PC-3 (cell line): ENCODE measurements at regions of chr7 and their contacts with region 1.

Region 1: DNA sequence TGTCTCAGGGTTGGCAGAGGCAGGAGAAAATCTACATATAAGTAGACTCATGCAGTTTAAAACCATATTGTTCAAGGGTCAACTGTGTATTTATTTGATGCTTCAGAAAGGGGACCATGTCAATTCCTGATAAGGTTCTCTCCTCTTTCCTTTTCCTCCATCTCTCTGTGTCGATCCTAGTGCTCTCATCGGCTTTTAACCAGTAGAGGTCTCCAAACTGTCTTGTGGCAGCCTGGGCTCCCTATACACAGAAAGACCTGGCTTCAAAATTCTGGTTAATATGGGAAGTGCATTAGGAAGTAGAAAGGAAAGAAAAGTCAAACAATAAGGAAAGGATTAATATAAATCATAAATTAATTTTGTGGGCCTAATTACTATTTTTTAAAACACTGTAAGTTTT is 304.4 kb upstream of the C7orf33 start:
- DNase-seq: peak; percentile 54
- ATAC-seq: peak; percentile 81
- H3K4me3 ChIP-seq: no peak overlapping the region
- H3K27ac ChIP-seq: no peak overlapping the region
- H3K4me1 ChIP-seq: no peaks in the 10 kb centered on the region
- H3K27me3 ChIP-seq: peaks cover 17% of the 10 kb centered on the region
- CTCF ChIP-seq: peak; percentile 69

Region 2: DNA sequence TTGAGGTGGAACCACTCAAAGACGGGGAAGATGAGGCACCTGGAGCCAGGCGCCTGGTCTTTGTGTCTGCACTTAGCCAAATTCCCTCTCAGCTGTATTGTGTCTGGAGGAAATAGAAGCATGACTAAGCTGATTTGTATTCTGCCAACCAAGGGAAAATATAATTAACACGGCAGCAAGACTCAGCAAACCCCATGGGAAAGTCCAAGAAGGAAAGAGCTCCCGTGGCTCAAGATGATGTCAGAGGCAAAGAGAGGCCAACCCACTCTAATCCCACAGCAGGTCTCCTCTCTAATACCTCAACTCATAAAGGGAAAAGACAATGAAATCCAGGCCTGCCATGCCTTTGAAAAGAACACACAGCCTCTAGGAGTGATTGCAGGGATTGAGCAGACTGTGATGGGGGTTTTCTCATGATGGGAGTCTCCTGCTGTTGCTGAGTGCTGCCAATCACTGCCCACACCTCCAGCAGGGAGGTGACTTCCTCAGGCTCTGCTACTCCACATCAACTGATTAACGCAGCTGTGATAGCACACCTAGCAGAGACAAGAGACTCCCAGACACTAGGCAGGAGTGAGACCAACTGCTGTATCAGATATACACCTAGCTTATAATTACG is 48.9 kb after region 1 on chr7:
- CTCF ChIA-PET with region 1: no interaction called
- POLR2A ChIA-PET with region 1: no interaction called
- intact Hi-C with region 1: loop called (anchors 5 kb)
- DNase-seq: peak; percentile 41
- ATAC-seq: peak; percentile 11; the same call in 1 of the 2 replicates
- H3K4me3 ChIP-seq: no peak overlapping the region
- H3K27ac ChIP-seq: no peak overlapping the region
- H3K4me1 ChIP-seq: peaks cover 38% of the 10 kb centered on the region
- H3K27me3 ChIP-seq: peaks cover 20% of the 10 kb centered on the region
- CTCF ChIP-seq: no peak

Region 3: GRCh38 chr7:148398844-148399373 is 112.8 kb after region 1 on chr7:
- CTCF ChIA-PET with region 1: no interaction called
- POLR2A ChIA-PET with region 1: no interaction called
- intact Hi-C with region 1: no loop called
- DNase-seq: peak; percentile 10
- ATAC-seq: no peak
- H3K4me3 ChIP-seq: no peak overlapping the region
- H3K27ac ChIP-seq: no peak overlapping the region
- H3K4me1 ChIP-seq: no peaks in the 10 kb centered on the region
- H3K27me3 ChIP-seq: peaks cover 75% of the 10 kb centered on the region
- CTCF ChIP-seq: no peak

Region 4: DNA sequence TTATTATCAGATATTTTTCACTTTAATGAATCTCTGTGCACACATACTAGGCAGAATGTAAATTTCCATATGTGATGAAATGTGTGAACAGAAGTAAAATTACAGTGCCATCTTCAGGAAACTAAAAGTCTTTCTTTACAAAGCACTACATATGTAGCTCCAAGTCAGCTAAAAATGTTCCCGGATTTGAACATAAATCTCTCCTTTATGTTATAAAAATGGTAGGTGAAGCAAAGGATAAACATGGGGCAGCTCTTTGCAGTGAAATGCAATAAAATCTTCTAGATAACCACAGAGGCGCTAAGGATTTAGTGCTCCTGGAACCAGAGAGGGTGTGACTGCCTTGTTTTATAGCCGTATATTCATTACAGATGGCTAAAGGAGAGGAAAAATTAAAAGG is 199.5 kb after region 1 on chr7:
- CTCF ChIA-PET with region 1: no interaction called
- POLR2A ChIA-PET with region 1: no interaction called
- intact Hi-C with region 1: loop called (anchors 1 kb)
- DNase-seq: peak; percentile 12
- ATAC-seq: peak; percentile 73
- H3K4me3 ChIP-seq: no peak overlapping the region
- H3K27ac ChIP-seq: no peak overlapping the region
- H3K4me1 ChIP-seq: no peaks in the 10 kb centered on the region
- H3K27me3 ChIP-seq: peaks cover 53% of the 10 kb centered on the region
- CTCF ChIP-seq: peak; percentile 48; the same call in 1 of the 2 replicates